Activated CD4-positive, alpha-beta memory T cell treated with anti-CD3 and anti-CD28 coated beads, Interleukin-2, amount 10 ng/mL, durations not matched to agents 7 days and 5 days (primary cell): ENCODE measurements at regions of chr14 and their contacts with region 1.

Region 1: DNA sequence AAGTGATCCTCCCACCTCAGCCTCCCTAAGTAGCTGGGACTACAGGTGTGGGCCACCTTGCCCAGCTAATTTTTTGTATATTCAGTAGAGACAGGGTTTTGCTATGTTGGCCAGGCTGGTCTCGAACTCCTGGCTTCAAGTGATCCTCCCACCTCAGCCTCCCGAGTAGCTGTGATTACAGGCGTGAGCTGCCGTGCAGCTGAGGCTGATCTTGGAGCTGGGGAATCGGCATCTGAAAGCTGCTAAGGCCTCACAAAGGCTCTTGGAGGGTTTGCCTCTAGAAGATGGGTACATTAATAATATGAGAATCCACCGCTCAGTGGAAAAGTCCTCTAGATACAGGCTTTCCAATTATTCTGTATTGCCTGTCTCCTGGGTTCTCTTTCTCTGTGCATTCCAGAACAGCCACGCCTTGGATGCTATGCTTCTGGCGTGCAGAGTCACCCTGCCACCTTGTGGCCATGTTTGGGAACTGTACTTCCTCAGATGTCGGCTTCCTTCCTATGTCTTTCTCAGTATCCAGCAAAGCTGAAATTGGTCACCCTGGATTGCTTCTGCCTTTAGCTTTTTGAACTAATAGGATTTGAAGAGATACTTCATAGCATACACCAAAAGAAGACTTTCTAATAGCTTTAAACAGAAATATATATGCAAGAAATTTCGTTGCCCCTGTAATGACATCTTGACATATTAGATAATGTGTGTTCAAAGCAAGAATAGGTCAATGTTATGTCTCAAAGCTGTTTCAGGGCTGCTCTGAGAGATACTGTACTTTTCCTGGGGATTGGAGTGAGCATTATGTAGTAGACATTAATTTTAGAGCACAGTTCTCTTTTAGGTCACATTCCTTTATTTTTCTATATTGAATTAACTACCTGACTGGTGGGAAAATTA is 75.4 kb downstream of the SNAPC1 start:
- DNase-seq: peak; percentile 81
- H3K4me3 Mint-ChIP-seq: no peak overlapping the region
- H3K27ac Mint-ChIP-seq: no peak overlapping the region
- H3K4me1 Mint-ChIP-seq: peaks cover 5% of the 10 kb centered on the region
- H3K27me3 Mint-ChIP-seq: peaks cover 22% of the 10 kb centered on the region

Region 2: GRCh38 chr14:61296719-61297502 is 540.7 kb before region 1 on chr14:
- CTCF ChIA-PET with region 1: interaction called, 11 read pairs
- POLR2A ChIA-PET with region 1: no interaction called
- DNase-seq: no peak
- H3K4me3 Mint-ChIP-seq: no peak overlapping the region
- H3K27ac Mint-ChIP-seq: no peak overlapping the region
- H3K4me1 Mint-ChIP-seq: peaks cover 29% of the 10 kb centered on the region
- H3K27me3 Mint-ChIP-seq: no peaks in the 10 kb centered on the region

Region 3: DNA sequence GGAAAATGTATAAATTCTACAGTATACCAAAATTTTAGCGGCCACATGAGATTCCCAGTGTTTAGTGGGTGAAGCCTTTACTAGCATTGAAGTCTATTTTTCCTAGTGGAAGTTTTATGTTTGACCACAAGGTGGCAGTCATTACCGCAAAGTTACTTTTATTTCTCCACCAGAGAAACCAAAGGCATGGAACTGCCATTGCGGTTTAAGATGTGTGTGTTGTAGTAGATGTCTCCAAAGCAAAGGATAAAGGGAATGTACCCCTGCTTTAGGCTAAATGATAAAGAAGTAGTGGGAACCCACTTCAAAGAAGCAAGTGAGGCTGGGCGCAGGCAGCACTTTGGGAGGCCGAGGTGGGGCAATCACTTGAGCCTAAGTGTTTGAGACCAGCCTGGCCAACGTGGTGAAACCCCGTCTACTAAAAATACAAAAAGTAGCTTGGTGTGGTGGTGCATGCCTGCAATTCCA is 375.7 kb before region 1 on chr14:
- CTCF ChIA-PET with region 1: interaction called, 22 read pairs
- POLR2A ChIA-PET with region 1: interaction called, 3 read pairs
- DNase-seq: no peak
- H3K4me3 Mint-ChIP-seq: no peak overlapping the region
- H3K27ac Mint-ChIP-seq: peak overlapping the region; percentile 81
- H3K4me1 Mint-ChIP-seq: peaks cover 56% of the 10 kb centered on the region
- H3K27me3 Mint-ChIP-seq: no peaks in the 10 kb centered on the region

Region 4: GRCh38 chr14:61737915-61738314 is 99.7 kb before region 1 on chr14:
- CTCF ChIA-PET with region 1: interaction called, 10 read pairs
- POLR2A ChIA-PET with region 1: no interaction called
- DNase-seq: no peak
- H3K4me3 Mint-ChIP-seq: no peak overlapping the region
- H3K27ac Mint-ChIP-seq: no peak overlapping the region
- H3K4me1 Mint-ChIP-seq: peaks cover 22% of the 10 kb centered on the region
- H3K27me3 Mint-ChIP-seq: no peaks in the 10 kb centered on the region

Region 5: GRCh38 chr14:61761959-61762786 is 75.4 kb before region 1 on chr14 and contains the start of gene SNAPC1:
- CTCF ChIA-PET with region 1: interaction called, 11 read pairs
- POLR2A ChIA-PET with region 1: no interaction called
- DNase-seq: peak; percentile 98
- H3K4me3 Mint-ChIP-seq: peak within 1 kb of the TSS; percentile 98
- H3K27ac Mint-ChIP-seq: peak within 1 kb of the TSS; percentile 96
- H3K4me1 Mint-ChIP-seq: peaks cover 50% of the 10 kb centered on the region
- H3K27me3 Mint-ChIP-seq: peaks cover 4% of the 10 kb centered on the region
- total RNA-seq, gene SNAPC1: 5.5 to 6.0 TPM